Left colon (tissue), 2 donors: ENCODE measurements at regions of chr1 and their contacts with region 1.

Region 1: GRCh38 chr1:77926561-77927357 is 38.3 kb downstream of the NEXN start:
- DNase-seq: no peak
- ATAC-seq: no peak

Region 2: DNA sequence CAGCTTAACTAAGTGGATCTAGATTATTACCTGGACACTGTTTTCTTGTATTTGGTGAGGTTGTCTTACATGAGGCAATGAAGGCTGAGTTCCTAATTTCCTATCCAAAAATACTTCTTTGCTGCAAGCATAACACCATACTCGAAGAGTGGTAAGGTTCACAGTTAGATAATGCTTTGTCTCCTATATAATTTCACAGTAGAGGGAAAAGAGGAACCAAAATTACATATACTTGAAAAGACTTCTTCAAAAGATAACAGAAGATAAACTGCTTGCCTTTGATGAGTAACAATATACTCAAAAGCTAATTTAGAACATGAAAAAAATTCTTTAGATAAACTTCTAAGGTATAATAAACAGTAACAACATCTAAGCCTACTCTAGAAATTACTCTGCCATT is 187.5 kb before region 1 on chr1:
- intact Hi-C with region 1: loop called in 1 of 2 experiments (anchors 5 kb)
- DNase-seq: no peak
- ATAC-seq: no peak